BJ (cell line): ENCODE measurements at regions of chr17 and their contacts with region 1.

Region 1: DNA sequence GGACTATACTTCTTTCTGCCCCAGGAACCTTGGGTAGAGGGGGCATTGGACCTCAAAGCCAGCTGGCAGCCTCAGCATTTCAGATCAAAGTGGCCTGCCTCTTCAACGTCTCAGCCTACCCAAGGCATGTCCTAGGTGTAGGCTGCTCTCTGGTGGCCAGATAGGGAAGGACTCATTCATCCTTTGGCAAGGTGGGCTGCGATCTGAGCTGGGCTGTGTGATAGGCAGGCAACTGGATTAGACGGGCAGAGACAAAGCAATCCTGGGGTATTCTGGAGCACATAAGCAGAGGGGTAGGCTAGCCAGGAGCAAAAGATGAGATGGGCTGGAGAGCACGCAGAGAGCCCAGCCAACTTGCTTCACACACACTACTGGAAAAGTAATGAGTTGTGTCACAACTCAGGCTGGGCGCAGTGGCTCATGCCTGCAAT is 8.8 kb upstream of the NAGLU start:
- DNase-seq: no peak
- H3K4me3 ChIP-seq: no peak overlapping the region
- H3K27me3 ChIP-seq: no peaks in the 10 kb centered on the region
- CTCF ChIP-seq: peak; percentile 88

Region 2: GRCh38 chr17:42312285-42313130 is 214.8 kb before region 1 on chr17:
- CTCF ChIA-PET with region 1: interaction called, 24 read pairs
- POLR2A ChIA-PET with region 1: interaction called, 4 read pairs
- DNase-seq: no peak
- H3K4me3 ChIP-seq: no peak overlapping the region
- H3K27me3 ChIP-seq: no peaks in the 10 kb centered on the region
- CTCF ChIP-seq: peak; percentile 77

Region 3: DNA sequence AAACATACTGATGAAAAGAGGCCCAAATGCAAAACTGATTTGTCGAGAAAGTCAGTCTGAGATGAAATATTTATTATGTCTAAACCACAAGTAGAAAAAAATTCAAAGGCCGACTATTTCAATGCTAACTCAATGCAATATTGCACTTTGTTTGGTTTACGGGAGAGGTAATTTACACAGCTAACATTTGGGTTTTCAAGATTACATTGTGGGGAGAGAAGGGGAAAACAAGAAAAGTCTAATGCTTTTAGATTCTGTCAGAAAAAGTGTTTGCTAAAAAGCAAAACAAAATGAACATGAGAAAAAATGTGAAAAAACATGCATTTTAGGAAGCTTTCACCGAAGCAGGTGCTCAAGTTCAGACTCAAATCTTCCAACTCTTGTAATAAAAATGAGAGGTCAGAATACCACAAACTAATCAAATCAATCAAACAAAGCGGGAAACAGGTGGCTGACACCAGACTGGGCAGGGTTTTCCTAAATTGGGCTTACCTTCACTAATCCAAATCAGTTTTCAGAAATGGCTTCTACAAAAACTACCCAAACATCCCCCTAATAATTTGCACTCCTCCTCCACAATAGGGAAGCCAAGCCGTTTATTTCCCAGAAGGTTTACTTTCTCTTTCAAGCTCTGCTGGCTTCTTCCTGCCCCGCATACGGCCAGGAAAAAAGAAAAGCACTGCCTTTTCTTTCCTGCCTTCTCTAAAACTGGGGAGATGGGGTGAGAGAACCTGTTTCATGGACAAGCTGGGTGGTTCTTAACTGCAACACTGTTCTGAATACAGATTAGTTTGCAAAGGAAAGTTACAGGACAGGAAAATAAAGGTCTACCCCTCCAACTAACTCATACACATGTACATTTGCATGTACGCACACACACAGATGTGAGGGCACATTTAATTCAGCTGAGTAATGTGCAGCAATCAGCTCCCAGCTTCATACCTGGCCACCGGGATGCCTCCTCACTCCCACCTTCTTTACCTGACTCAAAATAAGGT is 148.4 kb before region 1 on chr17:
- CTCF ChIA-PET with region 1: no interaction called
- POLR2A ChIA-PET with region 1: no interaction called
- DNase-seq: no peak
- H3K4me3 ChIP-seq: peak overlapping the region; percentile 16; the same call in 1 of the 2 replicates
- H3K27me3 ChIP-seq: no peaks in the 10 kb centered on the region
- CTCF ChIP-seq: no peak

Region 4: GRCh38 chr17:42428141-42428944 is 98.9 kb before region 1 on chr17:
- CTCF ChIA-PET with region 1: interaction called, 13 read pairs
- POLR2A ChIA-PET with region 1: interaction called, 3 read pairs
- DNase-seq: peak; percentile 97
- H3K4me3 ChIP-seq: no peak overlapping the region
- H3K27me3 ChIP-seq: no peaks in the 10 kb centered on the region
- CTCF ChIP-seq: peak; percentile 86